ENCODE measurements at regions of chr1 and their contacts with region 1.

Region 1: GRCh38 chr1:168439456-168440375 is 104.1 kb downstream of the XCL2 start:
- DNase-seq: peak; percentile 78
- H3K4me3 Mint-ChIP-seq: peak overlapping the region; percentile 57
- H3K27ac Mint-ChIP-seq: no peak overlapping the region
- H3K4me1 Mint-ChIP-seq: peaks cover 52% of the 10 kb centered on the region
- H3K27me3 Mint-ChIP-seq: no peaks in the 10 kb centered on the region

Region 2: DNA sequence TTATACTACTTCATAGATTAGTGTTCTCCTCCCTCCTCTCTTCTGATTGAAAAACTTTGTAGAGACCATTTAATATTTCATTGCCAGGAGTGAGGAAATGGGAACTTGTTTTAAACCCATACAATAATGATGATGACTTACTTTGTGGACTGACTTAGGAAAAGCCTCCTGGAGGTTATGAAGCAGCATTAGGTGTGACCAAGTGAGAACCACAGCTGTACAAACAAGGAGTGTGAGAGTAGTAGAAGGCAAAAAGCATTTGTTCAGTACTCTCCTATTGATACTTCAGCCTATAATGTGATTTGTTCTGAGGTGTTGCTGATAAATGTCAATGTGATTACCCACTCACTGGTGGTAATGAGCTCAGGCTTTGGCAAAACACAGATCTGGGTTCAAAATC is 252.5 kb before region 1 on chr1:
- intact Hi-C with region 1: no loop called
- DNase-seq: no peak
- H3K4me3 Mint-ChIP-seq: no peak overlapping the region
- H3K27ac Mint-ChIP-seq: no peak overlapping the region
- H3K4me1 Mint-ChIP-seq: peaks cover 13% of the 10 kb centered on the region
- H3K27me3 Mint-ChIP-seq: no peaks in the 10 kb centered on the region

Region 3: DNA sequence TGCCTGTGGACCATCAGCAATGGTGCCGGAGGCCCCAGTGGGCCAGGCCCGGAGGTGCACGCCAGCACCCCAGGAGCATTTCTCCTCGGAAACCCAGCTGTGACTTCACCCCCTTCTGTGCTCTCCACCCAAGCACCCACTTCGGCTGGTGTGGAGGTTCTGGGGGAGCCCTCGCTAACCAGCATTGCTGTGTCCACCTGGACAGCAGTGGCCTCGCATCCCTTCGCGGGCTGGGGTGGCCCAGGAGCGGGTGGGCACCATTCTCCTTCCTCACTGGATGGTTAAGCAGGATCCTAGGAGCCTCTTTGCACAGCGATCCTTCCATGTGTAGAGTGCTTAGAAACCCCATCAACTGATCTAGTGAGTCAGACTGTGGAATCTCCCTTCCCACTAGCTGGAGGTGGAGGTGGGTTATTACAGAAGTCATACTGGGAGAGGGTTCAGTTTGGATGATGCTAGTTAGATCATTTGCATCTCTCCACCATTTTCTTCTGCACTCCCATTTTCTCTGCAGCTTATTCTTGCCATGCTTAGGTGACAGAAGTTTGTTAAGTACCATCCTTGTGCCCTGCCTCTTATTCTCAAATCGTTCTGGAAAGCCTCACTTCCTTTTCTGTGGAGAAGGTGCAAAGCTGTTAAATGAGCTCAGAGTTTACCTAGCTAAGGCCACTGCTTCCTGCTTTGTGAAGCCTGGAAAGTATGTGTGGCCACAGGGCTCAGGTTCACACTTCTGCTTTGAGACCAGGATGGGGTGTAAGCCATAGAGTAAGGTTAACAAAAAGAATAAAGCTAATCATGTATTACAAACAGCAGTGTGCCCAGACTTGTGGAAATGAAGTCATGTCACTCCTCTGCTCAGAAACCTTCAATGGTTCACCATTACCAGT is 126.8 kb before region 1 on chr1:
- intact Hi-C with region 1: no loop called
- DNase-seq: no peak
- H3K4me3 Mint-ChIP-seq: no peak overlapping the region
- H3K27ac Mint-ChIP-seq: peak overlapping the region; percentile 10
- H3K4me1 Mint-ChIP-seq: peaks cover 34% of the 10 kb centered on the region
- H3K27me3 Mint-ChIP-seq: peaks cover 2% of the 10 kb centered on the region

Region 4: DNA sequence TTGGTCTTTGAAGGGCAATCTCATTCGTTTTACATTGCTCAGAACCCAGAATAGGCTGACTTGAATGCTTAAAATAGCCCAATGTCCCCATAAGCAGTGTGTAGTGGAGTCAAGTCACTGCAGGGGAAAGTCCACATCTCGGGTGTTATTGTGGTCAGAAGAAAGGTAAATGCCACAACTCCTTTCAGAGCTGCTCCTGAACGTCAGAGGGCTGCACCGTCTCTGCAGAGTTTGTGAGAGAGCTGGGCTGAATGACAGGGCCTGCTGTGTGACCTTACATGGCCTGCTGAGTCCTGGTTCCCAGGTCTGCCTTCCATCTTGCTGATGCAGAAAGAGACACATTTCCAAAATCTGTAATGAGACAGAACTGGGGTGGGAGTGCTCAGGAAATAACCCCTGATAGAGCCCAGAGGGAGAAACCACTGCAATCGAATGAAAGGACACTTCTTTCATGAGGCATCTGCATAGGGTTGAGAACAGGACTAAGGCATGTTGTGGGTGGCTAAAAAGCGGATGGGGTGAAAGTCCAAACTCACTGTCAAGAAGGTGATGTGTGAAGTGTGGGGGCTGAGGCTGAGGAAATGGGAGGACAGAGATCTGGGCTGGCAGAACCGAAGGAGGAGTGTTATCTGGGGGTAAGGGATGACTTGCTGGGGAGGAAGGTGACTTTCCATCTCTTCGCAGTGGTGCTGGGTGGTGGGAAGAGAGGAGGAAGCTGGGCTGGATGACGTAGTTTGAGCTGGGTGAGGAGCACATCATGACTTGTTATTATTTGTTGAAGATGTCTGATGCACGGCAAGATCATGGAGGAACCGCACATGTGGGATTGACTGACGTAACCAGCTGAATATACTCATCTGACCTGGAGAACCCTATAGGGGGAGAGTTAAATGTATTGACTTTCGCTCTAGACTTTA is 70.4 kb after region 1 on chr1:
- intact Hi-C with region 1: loop called (anchors 5 kb)
- DNase-seq: peak; percentile 27
- H3K4me3 Mint-ChIP-seq: no peak overlapping the region
- H3K27ac Mint-ChIP-seq: peak overlapping the region; percentile 77
- H3K4me1 Mint-ChIP-seq: peaks cover 82% of the 10 kb centered on the region
- H3K27me3 Mint-ChIP-seq: peaks cover 1% of the 10 kb centered on the region

Region 5: DNA sequence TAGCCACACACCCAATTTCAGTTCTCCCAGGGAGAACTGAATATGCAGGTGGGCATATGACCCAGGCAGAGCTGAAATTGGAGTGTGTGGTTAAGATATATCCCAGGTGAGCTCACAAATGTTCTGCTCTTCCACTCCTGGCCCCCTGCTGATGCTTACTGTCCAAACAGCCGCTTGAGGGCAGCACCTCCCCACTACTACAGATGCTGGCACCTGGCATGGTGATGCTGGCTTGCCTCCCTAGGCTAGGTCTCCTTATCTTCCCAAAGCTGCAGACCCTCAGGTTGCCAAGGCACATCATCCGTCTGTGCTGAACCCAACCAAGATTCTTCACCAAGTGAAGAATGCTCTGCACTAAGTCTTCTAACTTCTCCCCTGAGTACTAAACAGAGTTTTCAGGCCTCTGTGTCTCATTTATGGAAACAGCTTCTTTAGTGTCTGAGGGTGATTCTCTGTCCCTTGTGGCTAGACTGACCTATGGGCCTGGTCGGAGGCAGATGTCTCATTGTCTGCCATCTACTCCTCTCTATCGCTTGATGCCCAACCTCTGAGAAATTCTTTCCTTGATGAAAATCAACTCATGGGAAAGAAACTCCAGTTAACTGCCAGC is 163.9 kb after region 1 on chr1:
- intact Hi-C with region 1: loop called (anchors 1 kb)
- DNase-seq: peak; percentile 41
- H3K4me3 Mint-ChIP-seq: no peak overlapping the region
- H3K27ac Mint-ChIP-seq: no peak overlapping the region
- H3K4me1 Mint-ChIP-seq: no peaks in the 10 kb centered on the region
- H3K27me3 Mint-ChIP-seq: peaks cover 13% of the 10 kb centered on the region

Region 6: DNA sequence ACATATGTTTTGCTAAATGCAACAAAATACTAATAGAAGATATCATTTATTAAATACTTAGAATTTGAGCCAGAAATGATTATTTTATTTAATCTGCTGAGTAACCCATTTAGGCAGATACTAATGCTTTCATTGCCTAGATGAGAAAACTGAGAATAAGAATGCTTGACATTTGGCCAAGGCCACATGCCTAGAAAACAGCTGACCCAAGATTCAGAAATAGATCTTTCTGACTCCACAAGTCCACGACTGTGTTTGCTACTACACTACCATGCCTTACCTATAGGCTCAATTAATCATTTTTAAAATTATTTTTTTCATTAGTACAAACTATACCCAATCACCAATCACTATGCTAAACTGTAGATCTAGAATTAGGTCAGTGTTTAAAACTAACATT is 796.4 kb after region 1 on chr1:
- intact Hi-C with region 1: loop called (anchors 10 kb)
- DNase-seq: no peak
- H3K4me3 Mint-ChIP-seq: no peak overlapping the region
- H3K27ac Mint-ChIP-seq: no peak overlapping the region
- H3K4me1 Mint-ChIP-seq: no peaks in the 10 kb centered on the region
- H3K27me3 Mint-ChIP-seq: peaks cover 1% of the 10 kb centered on the region

Measured in activated T-helper 1 cell treated with anti-CD3 and anti-CD28 coated beads, Interleukin-12 subunit alpha, Interleukin-12 subunit beta, Interleukin-2, Interleukin-4 antibody, amounts not matched to agents 30 ng/mL and 10 ng/mL and 1 ng/mL, durations not matched to agents 14 hours and 24 hours and 36 hours (primary cell).